Testis (tissue), 5 donors: ENCODE measurements at regions of chr15 and their contacts with region 1.

Region 1: DNA sequence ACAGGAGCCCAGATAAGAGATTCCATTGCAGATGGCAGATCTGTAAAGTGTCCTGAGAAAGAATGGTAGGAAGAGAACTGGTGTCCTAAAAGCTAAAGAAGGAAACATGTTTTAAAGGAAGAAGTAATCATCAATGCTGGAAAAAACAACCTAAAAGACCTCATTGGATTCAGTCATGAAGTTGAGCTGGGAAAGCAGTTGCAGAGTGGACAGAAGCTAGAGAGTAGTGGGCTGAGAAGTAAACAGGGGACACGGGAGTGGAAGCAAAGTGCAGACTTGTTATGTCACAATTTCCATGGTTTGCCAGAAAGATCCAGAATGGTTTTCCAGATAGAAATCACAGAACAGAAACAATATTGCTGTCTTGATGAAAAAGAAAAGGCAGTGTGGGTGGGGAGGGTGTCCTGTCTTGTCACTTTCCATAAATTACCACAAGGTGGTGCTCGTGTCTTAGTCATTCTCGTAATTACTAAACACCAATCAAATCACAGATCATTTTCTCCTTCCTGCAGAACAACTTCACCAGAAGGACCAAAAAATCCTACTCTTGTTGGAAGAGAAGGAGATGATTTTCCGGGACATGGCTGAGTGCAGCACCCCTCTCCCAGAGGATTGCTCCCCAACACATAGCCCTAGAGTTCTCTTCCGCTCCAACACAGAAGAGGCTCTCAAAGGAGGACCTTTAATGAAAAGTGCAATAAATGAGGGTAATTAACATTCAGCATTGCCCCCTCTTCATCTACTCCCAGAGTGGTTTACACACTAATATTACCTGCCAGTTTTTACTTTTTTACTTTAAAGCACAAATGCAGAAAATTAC is 64.5 kb downstream of the KLHL25 start:
- DNase-seq: peak; percentile 70
- H3K4me3 ChIP-seq: no peak overlapping the region
- H3K27ac ChIP-seq: peak overlapping the region in 1 of 2 donors; percentile 31
- H3K4me1 ChIP-seq: peaks cover 5% of the 10 kb centered on the region
- H3K27me3 ChIP-seq: no peaks in the 10 kb centered on the region
- CTCF ChIP-seq: peak; percentile 72 to 85 (median 85)
- POLR2A ChIP-seq: no peak

Region 2: DNA sequence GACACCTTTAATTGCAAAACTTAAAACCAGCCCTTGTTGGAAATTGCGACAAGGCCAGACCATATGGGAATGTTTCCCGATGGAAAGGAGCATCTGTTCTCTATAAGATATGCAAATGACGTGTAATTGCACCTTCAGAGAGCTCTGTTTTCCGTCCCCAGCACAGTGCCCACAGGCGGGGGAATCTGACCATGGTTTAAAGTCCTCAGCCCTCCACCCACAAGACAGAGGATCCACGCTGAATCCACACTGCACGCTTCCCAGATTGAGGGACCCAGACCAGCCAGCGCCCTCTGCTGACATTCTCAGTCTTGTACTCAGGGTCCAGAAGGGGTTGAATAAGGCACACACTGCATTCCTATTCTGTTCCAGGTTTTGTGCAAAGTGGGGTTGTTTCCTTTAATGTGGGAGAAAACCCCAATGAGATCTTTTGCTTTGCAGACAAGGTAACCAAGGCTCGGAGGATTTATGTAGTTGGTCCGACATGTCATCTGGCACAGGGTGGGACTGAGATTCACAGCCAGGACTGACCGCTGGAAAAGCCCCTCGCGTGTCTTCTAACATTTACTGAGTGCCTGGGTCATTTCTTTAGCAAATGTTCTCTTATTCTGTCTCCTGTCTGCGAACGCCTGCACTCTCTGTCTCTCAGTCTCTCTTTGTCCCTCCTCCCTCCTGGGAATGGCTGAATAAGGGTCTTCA is 101.4 kb after region 1 on chr15:
- intact Hi-C with region 1: loop called (anchors 10 kb)
- DNase-seq: peak; percentile 79
- H3K4me3 ChIP-seq: no peak overlapping the region
- H3K27ac ChIP-seq: no peak overlapping the region
- H3K4me1 ChIP-seq: no peaks in the 10 kb centered on the region
- H3K27me3 ChIP-seq: no peaks in the 10 kb centered on the region
- CTCF ChIP-seq: peak; percentile 47 to 52 (median 48)
- POLR2A ChIP-seq: no peak